ENCODE measurements at regions of chr13 and their contacts with region 1.

Region 1: GRCh38 chr13:114226699-114227323 is 7.9 kb upstream of the CDC16 start:
- DNase-seq: peak; percentile 73 to 88 (median 86)
- H3K4me3 ChIP-seq: no peak overlapping the region
- H3K27ac ChIP-seq: no peak overlapping the region
- H3K4me1 ChIP-seq: no peaks in the 10 kb centered on the region
- H3K27me3 ChIP-seq: no peaks in the 10 kb centered on the region
- CTCF ChIP-seq: peak; percentile 69 to 91 (median 91)
- EP300 ChIP-seq: no peak
- POLR2A ChIP-seq: no peak

Region 2: GRCh38 chr13:113816946-113817859 is 409.6 kb before region 1 on chr13:
- intact Hi-C with region 1: loop called in 2 of 4 experiments (anchors 5 kb)
- DNase-seq: peak; percentile 85 to 90 (median 89)
- H3K4me3 ChIP-seq: no peak overlapping the region
- H3K27ac ChIP-seq: no peak overlapping the region
- H3K4me1 ChIP-seq: peaks cover 25% of the 10 kb centered on the region
- H3K27me3 ChIP-seq: no peaks in the 10 kb centered on the region
- CTCF ChIP-seq: peak; percentile 64 to 84 (median 83)
- EP300 ChIP-seq: no peak
- POLR2A ChIP-seq: no peak

Region 3: DNA sequence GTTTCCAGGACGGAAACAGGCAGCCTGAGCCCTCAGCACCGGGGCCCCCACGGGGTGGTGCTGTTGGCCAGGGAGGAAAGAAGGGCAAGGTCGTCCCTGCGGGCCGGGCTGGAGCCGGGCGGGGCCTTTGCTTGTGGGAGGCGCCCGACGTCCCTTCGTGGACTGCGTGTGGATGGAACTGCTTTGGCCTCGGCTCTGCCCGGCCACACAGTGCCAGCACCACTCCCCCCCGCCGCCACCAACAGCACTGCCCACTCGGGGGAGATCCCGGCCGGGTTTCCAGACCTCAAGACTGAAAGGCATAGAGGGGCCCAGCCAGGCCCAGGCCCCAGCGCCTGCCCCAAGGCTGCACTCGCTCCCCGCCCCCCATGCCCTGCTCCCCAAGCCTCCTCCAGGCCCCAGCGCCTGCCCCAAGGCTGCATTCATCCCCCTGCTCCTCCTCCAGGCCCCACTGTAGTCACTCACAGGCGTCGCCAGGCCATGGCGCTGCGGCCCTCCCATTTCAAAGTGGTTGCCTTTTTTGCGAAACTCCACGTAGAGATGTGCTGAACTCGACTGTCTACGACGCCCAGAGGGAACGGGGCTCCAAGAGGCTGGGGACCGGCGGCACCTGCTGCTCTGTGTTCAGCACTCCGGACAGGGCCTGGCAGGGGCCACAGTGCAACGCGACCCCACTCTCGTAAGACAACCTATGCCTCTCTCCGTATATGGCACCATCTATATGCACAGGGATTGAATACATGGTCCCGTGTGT is 275.4 kb before region 1 on chr13:
- intact Hi-C with region 1: loop called (anchors 2 kb)
- DNase-seq: peak; percentile 86 to 93 (median 86)
- H3K4me3 ChIP-seq: peak overlapping the region; percentile 8
- H3K27ac ChIP-seq: no peak overlapping the region
- H3K4me1 ChIP-seq: no peaks in the 10 kb centered on the region
- H3K27me3 ChIP-seq: no peaks in the 10 kb centered on the region
- CTCF ChIP-seq: peak; percentile 78 to 87 (median 79)
- EP300 ChIP-seq: no peak
- POLR2A ChIP-seq: no peak

Region 4: DNA sequence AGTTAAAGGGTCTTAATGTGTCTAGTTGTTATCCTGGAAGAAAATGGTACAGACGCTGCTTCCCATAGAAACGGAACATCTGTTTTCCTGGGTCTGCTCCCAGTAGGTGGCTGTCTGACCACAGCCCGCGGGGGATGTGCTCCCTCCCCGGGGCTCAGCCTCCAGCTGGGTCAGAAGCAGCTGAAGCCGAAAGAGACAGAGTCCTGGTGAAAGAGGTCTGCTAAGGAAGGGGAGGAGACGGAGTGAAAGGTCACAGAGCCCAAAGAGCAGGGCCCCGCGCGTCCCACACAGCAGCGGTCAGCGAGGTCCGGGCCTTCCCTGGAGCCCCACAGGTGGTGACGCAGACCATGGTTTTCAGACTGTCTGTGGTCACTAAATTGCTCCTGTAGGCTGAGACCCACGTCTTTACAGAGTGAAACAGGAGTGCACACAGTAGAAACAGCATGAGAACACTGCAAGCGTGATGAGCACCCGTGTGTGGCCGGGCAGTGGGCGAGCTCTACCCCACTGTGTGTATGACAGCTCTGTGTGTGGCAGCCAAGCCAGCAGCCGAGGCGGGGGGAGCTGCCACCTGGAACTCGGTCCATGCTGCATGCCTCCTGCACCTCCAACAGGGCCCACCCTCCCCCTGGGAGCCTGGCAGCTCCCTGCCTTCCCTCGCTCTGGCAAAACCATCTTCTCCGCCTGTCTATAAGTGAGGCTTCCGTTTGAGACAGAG is 200.9 kb before region 1 on chr13:
- intact Hi-C with region 1: loop called in 1 of 4 experiments (anchors 5 kb)
- DNase-seq: peak; percentile 65 to 81 (median 71)
- H3K4me3 ChIP-seq: no peak overlapping the region
- H3K27ac ChIP-seq: peak overlapping the region in 1 of 2 donors; percentile 35
- H3K4me1 ChIP-seq: peaks cover 13% of the 10 kb centered on the region
- H3K27me3 ChIP-seq: no peaks in the 10 kb centered on the region
- CTCF ChIP-seq: peak in 1 of 3 donors; percentile 9
- EP300 ChIP-seq: no peak
- POLR2A ChIP-seq: no peak

Region 5: GRCh38 chr13:114038211-114038613 is 188.6 kb before region 1 on chr13:
- intact Hi-C with region 1: no loop called
- DNase-seq: no peak
- H3K4me3 ChIP-seq: no peak overlapping the region
- H3K27ac ChIP-seq: no peak overlapping the region
- H3K4me1 ChIP-seq: peaks cover 2% of the 10 kb centered on the region
- H3K27me3 ChIP-seq: no peaks in the 10 kb centered on the region
- CTCF ChIP-seq: no peak
- EP300 ChIP-seq: no peak
- POLR2A ChIP-seq: no peak

Measured in ovary (tissue), 10 donors.